Sigmoid colon (tissue), 7 donors: ENCODE measurements at regions of chr10 and their contacts with region 1.

Region 1: DNA sequence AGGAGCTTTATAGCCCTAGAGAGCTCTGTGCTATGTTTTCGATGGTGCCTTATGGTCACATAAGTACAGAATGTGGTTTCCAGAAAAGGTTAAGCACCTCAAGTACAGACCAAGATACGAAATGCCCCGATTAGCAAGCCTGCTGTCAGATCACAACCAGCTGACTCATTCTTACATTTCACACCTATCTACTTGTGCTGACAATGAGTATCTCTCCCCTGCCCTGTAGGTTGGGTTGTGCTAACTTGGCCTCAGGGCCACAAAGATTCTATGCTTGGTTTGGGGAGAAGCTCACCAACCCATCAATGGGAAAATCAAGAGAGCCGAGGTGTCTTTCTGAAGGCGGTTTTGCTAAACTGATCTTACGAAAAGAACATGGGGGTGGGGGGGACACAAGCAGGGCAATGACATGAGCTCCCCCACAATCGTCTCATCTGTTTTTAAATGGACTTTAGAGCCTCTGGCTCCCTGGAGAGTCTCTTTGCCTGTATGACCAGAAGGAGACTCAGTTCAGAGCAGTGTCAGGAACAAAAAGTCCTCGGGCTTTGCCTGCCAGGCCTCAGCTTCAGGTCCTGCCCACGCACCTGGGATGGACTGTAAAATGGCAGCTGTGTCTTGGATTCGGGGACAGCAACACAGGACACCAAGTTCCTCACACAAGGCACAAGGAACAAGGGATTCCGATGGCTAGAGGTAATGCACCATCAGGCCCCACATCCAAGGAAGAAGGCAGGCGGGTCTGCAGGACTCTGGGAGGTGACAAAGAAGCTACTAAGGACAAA is 55.1 kb downstream of the FAM53B start:
- DNase-seq: no peak
- H3K4me3 ChIP-seq: no peak overlapping the region
- H3K27ac ChIP-seq: no peak overlapping the region
- H3K4me1 ChIP-seq: peaks cover 0 to 52% (median 31%) of the 10 kb centered on the region in 4 donors
- H3K27me3 ChIP-seq: no peaks in the 10 kb centered on the region
- CTCF ChIP-seq: no peak
- EP300 ChIP-seq: no peak
- POLR2A ChIP-seq: no peak

Region 2: GRCh38 chr10:124647421-124648130 is 41.5 kb before region 1 on chr10:
- intact Hi-C with region 1: loop called (anchors 5 kb)
- DNase-seq: peak; percentile 82
- H3K4me3 ChIP-seq: no peak overlapping the region
- H3K27ac ChIP-seq: peak overlapping the region; percentile 58 to 85 (median 78)
- H3K4me1 ChIP-seq: peaks cover 0 to 78% (median 59%) of the 10 kb centered on the region in 4 donors
- H3K27me3 ChIP-seq: no peaks in the 10 kb centered on the region
- CTCF ChIP-seq: no peak
- EP300 ChIP-seq: no peak
- POLR2A ChIP-seq: no peak

Region 3: DNA sequence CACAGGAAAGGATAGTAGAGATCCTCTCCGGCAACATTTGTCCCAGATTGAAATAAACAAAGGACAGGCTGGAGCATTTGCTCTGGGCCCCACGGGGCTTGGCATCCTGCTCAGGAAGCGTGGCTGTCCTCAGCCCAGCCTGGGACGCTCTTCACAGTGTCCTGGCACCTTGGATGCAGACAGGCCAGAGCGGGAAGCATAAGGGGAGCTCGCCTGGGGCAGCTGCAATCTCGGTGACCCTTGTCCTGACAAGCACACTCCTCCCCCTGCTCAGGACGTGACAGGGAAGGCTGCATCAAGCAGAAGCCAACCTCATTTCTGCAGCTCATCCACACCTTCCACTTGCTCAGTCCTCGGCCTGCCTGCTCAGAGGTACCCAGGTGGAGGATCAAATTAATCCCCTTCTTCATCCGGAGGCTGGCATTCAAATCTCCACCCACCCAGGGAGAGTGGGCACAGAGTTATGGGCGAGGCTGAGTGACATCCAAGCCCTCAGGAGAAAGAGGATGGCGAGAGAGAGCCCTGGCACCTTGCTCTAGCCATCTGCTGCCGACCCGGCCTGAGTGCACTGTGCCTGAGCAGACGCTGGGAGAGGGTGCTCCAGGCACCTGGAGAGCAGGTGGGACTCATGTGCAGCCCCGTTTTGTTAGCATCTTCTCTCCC is 160.2 kb after region 1 on chr10:
- intact Hi-C with region 1: no loop called
- DNase-seq: no peak
- H3K4me3 ChIP-seq: no peak overlapping the region
- H3K27ac ChIP-seq: no peak overlapping the region
- H3K4me1 ChIP-seq: no peaks in the 10 kb centered on the region
- H3K27me3 ChIP-seq: no peaks in the 10 kb centered on the region
- CTCF ChIP-seq: no peak
- EP300 ChIP-seq: no peak
- POLR2A ChIP-seq: no peak